ENCODE measurements at regions of chr15 and their contacts with region 1.

Region 1: GRCh38 chr15:88904624-88905327 is 8.4 kb downstream of the MFGE8 start:
- DNase-seq: peak; percentile 32
- ATAC-seq: peak; percentile 96
- H3K4me3 ChIP-seq: no peak overlapping the region
- H3K27ac ChIP-seq: no peak overlapping the region
- H3K4me1 ChIP-seq: no peaks in the 10 kb centered on the region
- H3K27me3 ChIP-seq: no peaks in the 10 kb centered on the region; a peak in 1 of 4 replicates
- CTCF ChIP-seq: peak; percentile 90 to 98 (median 98)
- EP300 ChIP-seq: no peak
- POLR2A ChIP-seq: no peak
- RAD21 ChIP-seq: peak; percentile 88

Region 2: GRCh38 chr15:88680241-88681001 is 224.4 kb before region 1 on chr15:
- CTCF ChIA-PET with region 1: no interaction called
- POLR2A ChIA-PET with region 1: no interaction called
- RAD21 ChIA-PET with region 1: no interaction called
- SMC1A ChIA-PET with region 1: no interaction called
- in situ Hi-C with region 1: no loop called
- intact Hi-C with region 1: no loop called
- DNase-seq: no peak
- ATAC-seq: no peak
- H3K4me3 ChIP-seq: no peak overlapping the region
- H3K27ac ChIP-seq: no peak overlapping the region
- H3K4me1 ChIP-seq: peaks cover 6% of the 10 kb centered on the region
- H3K27me3 ChIP-seq: no peaks in the 10 kb centered on the region; a peak in 1 of 4 replicates
- CTCF ChIP-seq: no peak
- EP300 ChIP-seq: no peak
- POLR2A ChIP-seq: no peak
- RAD21 ChIP-seq: no peak

Region 3: GRCh38 chr15:88865498-88866099 is 39.2 kb before region 1 on chr15:
- CTCF ChIA-PET with region 1: no interaction called
- POLR2A ChIA-PET with region 1: no interaction called
- RAD21 ChIA-PET with region 1: no interaction called
- SMC1A ChIA-PET with region 1: no interaction called
- in situ Hi-C with region 1: no loop called
- intact Hi-C with region 1: no loop called
- DNase-seq: no peak
- ATAC-seq: no peak
- H3K4me3 ChIP-seq: no peak overlapping the region
- H3K27ac ChIP-seq: no peak overlapping the region
- H3K4me1 ChIP-seq: no peaks in the 10 kb centered on the region
- H3K27me3 ChIP-seq: no peaks in the 10 kb centered on the region; a peak in 2 of 4 replicates
- CTCF ChIP-seq: no peak
- EP300 ChIP-seq: no peak
- POLR2A ChIP-seq: no peak
- RAD21 ChIP-seq: no peak

Region 4: GRCh38 chr15:88878720-88879184 is 26.0 kb before region 1 on chr15:
- CTCF ChIA-PET with region 1: interaction called, 12 read pairs
- POLR2A ChIA-PET with region 1: no interaction called
- RAD21 ChIA-PET with region 1: interaction called, 3 read pairs
- SMC1A ChIA-PET with region 1: interaction called, 3 read pairs
- in situ Hi-C with region 1: no loop called
- intact Hi-C with region 1: no loop called
- DNase-seq: no peak
- ATAC-seq: peak; percentile 98
- H3K4me3 ChIP-seq: no peak overlapping the region
- H3K27ac ChIP-seq: no peak overlapping the region
- H3K4me1 ChIP-seq: no peaks in the 10 kb centered on the region
- H3K27me3 ChIP-seq: no peaks in the 10 kb centered on the region
- CTCF ChIP-seq: peak; percentile 69 to 83 (median 73)
- EP300 ChIP-seq: no peak
- POLR2A ChIP-seq: no peak
- RAD21 ChIP-seq: peak; percentile 36

Region 5: GRCh38 chr15:88918738-88919137 is 14.0 kb after region 1 on chr15:
- CTCF ChIA-PET with region 1: interaction called, 27 read pairs
- POLR2A ChIA-PET with region 1: interaction called, 4 read pairs
- RAD21 ChIA-PET with region 1: interaction called, 4 read pairs
- SMC1A ChIA-PET with region 1: interaction called, 9 read pairs
- in situ Hi-C with region 1: no loop called
- intact Hi-C with region 1: no loop called
- DNase-seq: peak; percentile 75
- ATAC-seq: peak; percentile 88
- H3K4me3 ChIP-seq: no peak overlapping the region
- H3K27ac ChIP-seq: no peak overlapping the region
- H3K4me1 ChIP-seq: peaks cover 8% of the 10 kb centered on the region
- H3K27me3 ChIP-seq: peaks cover 0 to 2% of the 10 kb centered on the region in 2 experiments; a peak in 1 of 4 replicates
- CTCF ChIP-seq: no peak
- EP300 ChIP-seq: peak in 1 of 2 experiments; percentile 50; a peak in 1 of 4 replicates
- POLR2A ChIP-seq: no peak
- RAD21 ChIP-seq: no peak

Region 6: DNA sequence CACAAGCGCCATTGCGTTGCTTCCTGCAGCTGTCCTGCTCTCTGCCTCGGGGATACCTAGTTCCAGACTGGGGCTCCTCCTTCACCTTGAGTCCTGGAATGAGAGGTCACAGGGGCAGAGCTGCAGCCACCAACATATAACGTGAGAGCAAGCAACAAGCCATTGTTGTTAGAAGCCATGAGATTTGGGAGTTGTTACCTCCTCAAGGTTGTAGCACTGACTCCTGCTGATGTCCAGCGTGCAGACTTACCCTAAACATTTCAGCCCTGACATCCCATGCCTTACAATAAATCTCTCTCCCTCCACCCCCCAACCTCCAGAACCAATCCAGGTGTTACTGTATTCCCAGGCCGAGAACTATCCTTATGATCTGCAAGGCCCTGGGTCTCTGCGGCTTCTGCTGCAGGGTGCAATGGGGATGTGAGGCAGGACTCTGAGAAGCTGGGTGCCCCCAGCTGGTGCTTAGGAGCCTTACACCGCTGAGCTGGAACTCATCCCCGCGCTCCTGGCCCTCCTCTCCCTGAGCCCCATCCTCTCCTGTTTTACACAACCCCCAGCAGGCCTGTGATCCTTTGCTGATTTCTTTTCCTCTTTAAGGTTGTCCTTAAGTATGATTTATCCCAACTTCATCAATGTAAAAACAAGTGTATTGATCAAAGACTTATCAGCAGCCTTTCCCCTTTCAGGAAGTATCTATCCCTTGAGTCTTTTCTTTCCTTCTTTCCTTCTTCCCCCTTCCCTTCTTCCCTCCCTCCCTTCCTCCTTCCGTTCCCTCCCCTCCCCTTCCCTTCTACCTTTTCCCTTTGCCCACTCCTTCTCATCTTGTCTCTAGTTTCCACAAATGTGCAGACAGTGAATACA is 99.3 kb after region 1 on chr15:
- CTCF ChIA-PET with region 1: interaction called, 116 read pairs
- POLR2A ChIA-PET with region 1: no interaction called
- RAD21 ChIA-PET with region 1: interaction called, 34 read pairs
- SMC1A ChIA-PET with region 1: interaction called, 32 read pairs
- in situ Hi-C with region 1: no loop called
- intact Hi-C with region 1: loop called (anchors 1 kb)
- DNase-seq: no peak
- ATAC-seq: peak; percentile 75
- H3K4me3 ChIP-seq: no peak overlapping the region
- H3K27ac ChIP-seq: no peak overlapping the region
- H3K4me1 ChIP-seq: peaks cover 3% of the 10 kb centered on the region; the same call in 1 of the 2 replicates
- H3K27me3 ChIP-seq: no peaks in the 10 kb centered on the region; a peak in 1 of 4 replicates
- CTCF ChIP-seq: peak; percentile 30 to 45 (median 41); a peak in 4 of 6 replicates
- EP300 ChIP-seq: no peak
- POLR2A ChIP-seq: no peak
- RAD21 ChIP-seq: no peak

Region 7: DNA sequence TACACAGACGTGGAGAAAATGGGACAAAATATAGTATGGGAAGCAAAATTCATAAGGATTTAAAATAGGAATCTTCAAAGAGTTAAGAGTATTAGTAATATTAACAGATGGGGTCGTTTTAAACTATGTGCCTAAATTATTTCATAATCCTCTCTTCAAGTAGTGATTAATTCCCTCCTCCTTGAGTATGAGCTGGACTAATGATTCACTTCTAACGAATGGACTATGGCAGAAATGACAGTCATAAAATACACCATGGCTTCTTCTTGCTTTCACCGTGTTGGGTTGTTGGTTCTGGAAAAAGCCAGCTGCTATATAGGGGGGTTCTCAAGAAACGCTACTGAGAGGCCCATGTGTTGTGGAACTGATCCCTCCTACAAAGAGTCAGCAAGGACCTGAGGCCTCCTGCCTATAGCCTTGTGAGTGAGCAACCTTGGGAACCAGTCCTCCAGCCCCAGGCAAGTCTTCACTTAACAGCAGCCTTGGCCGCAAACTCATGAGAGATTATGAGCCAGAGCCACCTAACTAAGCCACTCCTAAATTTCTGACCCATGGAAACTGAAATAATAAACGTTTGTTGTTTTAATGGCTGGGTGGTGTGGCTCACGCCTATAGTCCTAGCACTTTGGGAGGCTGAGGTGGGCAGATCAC is 118.7 kb after region 1 on chr15:
- CTCF ChIA-PET with region 1: interaction called, 73 read pairs
- POLR2A ChIA-PET with region 1: no interaction called
- RAD21 ChIA-PET with region 1: interaction called, 8 read pairs
- SMC1A ChIA-PET with region 1: interaction called, 20 read pairs
- in situ Hi-C with region 1: loop called (anchors 5 kb)
- intact Hi-C with region 1: no loop called
- DNase-seq: no peak
- ATAC-seq: no peak
- H3K4me3 ChIP-seq: no peak overlapping the region
- H3K27ac ChIP-seq: no peak overlapping the region
- H3K4me1 ChIP-seq: no peaks in the 10 kb centered on the region
- H3K27me3 ChIP-seq: peaks cover 0 to 1% of the 10 kb centered on the region in 2 experiments; a peak in 1 of 4 replicates
- CTCF ChIP-seq: no peak
- EP300 ChIP-seq: no peak
- POLR2A ChIP-seq: no peak
- RAD21 ChIP-seq: no peak

Region 8: GRCh38 chr15:89057504-89058133 is 152.8 kb after region 1 on chr15:
- CTCF ChIA-PET with region 1: interaction called, 10 read pairs
- POLR2A ChIA-PET with region 1: no interaction called
- RAD21 ChIA-PET with region 1: interaction called, 4 read pairs
- SMC1A ChIA-PET with region 1: no interaction called
- in situ Hi-C with region 1: no loop called
- intact Hi-C with region 1: no loop called
- DNase-seq: peak; percentile 15
- ATAC-seq: peak; percentile 99
- H3K4me3 ChIP-seq: no peak overlapping the region
- H3K27ac ChIP-seq: no peak overlapping the region
- H3K4me1 ChIP-seq: no peaks in the 10 kb centered on the region
- H3K27me3 ChIP-seq: no peaks in the 10 kb centered on the region; a peak in 1 of 4 replicates
- CTCF ChIP-seq: peak; percentile 97 to 99 (median 99)
- EP300 ChIP-seq: no peak
- POLR2A ChIP-seq: no peak
- RAD21 ChIP-seq: peak; percentile 98

Region 9: GRCh38 chr15:89171136-89172072 is 266.6 kb after region 1 on chr15:
- CTCF ChIA-PET with region 1: interaction called, 32 read pairs
- POLR2A ChIA-PET with region 1: no interaction called
- RAD21 ChIA-PET with region 1: interaction called, 3 read pairs
- SMC1A ChIA-PET with region 1: interaction called, 5 read pairs
- in situ Hi-C with region 1: loop called (anchors 5 kb)
- intact Hi-C with region 1: no loop called
- DNase-seq: no peak
- ATAC-seq: peak; percentile 22; the same call in 1 of the 3 replicates
- H3K4me3 ChIP-seq: no peak overlapping the region
- H3K27ac ChIP-seq: no peak overlapping the region
- H3K4me1 ChIP-seq: peaks cover 18% of the 10 kb centered on the region
- H3K27me3 ChIP-seq: no peaks in the 10 kb centered on the region
- CTCF ChIP-seq: peak; percentile 54 to 68 (median 64)
- EP300 ChIP-seq: no peak
- POLR2A ChIP-seq: no peak
- RAD21 ChIP-seq: peak; percentile 53